ENCODE measurements at regions of chr16 and their contacts with region 1.

Region 1: GRCh38 chr16:11586856-11587642 is at the start of gene LITAF:
- DNase-seq: no peak
- H3K4me3 ChIP-seq: peak within 1 kb of the TSS; percentile 92 to 93
- H3K27ac ChIP-seq: peak within 1 kb of the TSS; percentile 99
- H3K4me1 ChIP-seq: peaks cover 36% of the 10 kb centered on the region
- H3K27me3 ChIP-seq: no peaks in the 10 kb centered on the region
- CTCF ChIP-seq: no peak
- POLR2A ChIP-seq: peak in 1 of 2 donors; percentile 91
- total RNA-seq, gene LITAF: 111 TPM

Region 2: DNA sequence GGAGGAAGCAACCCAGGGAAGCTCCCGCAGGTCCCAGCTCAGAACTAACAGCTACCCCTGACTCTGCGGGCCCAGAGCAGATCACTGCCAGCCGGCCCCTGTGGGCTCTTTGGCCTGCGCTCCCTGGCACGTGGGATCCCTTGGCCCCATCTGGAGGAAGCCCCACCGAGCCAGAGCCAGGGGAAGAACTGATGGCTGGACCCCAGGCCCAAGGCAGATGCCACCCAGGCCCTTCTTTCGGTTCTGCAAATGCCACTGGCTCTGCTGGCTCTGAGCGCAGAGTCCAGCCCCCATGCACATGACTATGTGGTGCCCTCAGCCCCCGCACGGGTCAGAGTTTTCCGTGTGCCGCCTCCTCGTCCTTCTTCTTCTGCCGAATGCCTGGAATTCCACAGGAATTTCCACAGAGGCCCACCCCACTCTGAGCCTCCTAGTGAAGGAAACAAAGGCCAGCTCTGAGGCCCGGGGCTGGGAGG is 45.5 kb after region 1 on chr16:
- intact Hi-C with region 1: loop called (anchors 5 kb)
- DNase-seq: no peak
- H3K4me3 ChIP-seq: peak overlapping the region in 1 of 2 donors; percentile 3
- H3K27ac ChIP-seq: peak overlapping the region; percentile 93
- H3K4me1 ChIP-seq: peaks cover 37% of the 10 kb centered on the region
- H3K27me3 ChIP-seq: no peaks in the 10 kb centered on the region
- CTCF ChIP-seq: no peak
- POLR2A ChIP-seq: no peak

Region 3: DNA sequence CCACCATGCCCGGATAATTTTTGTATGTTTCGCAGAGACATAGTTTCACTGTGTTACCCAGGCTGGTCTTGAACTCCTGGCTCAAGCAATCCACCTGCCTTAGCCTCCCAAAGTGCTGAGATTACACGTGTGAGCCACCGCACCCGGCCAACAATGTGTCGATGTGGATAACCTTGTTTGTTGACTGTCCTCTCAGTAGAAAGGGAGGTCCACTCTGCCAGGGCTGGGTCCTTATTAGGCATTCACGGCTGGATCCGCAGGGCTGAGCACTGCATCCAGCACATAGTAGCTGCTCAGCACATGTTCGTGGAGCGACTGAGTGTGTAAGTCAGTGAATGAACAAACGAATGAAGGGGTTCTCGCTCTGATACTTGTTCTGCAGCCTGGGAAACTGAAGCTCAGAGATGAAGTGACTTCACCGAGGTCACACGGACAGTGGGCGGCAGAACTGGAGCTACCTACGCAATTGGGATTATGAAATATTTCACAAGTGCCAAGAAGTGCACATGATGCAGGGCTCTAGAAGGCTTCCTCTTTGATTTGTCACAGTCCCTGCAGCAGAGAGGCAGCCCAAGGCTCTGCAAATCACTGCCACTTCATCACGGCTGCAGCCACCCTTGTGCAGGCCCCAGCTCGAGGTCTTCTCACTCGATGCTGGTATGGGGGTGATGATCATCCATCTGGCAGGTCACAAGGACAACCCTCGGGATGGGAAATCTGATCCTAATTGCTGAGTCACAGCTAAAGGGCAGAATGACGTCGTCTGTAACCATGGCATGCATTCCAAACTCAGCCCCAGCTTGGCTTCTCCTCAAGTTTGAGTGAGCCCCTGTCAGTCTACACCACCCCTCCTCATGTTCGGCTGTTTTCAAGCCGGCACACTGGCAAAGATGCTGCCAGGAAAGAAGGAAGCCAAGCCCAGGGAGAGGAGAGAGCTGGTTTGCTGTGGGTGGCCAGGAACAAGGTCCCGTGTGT is 53.2 kb after region 1 on chr16:
- intact Hi-C with region 1: loop called (anchors 5 kb)
- DNase-seq: peak in 1 of 2 donors; percentile 99
- H3K4me3 ChIP-seq: peak overlapping the region in 1 of 2 donors; percentile 22
- H3K27ac ChIP-seq: peak overlapping the region; percentile 98
- H3K4me1 ChIP-seq: peaks cover 21% of the 10 kb centered on the region
- H3K27me3 ChIP-seq: no peaks in the 10 kb centered on the region
- CTCF ChIP-seq: no peak
- POLR2A ChIP-seq: peak in 1 of 2 donors; percentile 71

Region 4: DNA sequence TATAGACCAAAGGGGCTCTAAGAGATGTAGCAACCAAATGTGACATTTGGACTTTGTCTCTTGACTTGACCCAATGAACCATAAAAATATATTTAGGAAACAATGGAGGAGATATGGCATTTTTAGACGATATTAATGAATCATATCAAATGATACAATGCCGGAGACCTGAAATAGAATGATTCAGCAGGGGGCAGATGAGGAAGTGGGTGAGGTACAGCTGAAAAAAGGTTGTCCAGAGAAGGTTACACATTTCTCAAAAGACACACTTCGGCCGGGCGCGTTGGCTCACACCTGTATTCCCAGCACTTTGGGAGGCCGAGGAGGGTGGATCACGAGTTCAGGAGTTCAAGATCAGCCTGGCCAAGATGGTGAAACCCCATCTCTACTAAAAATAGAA is 64.7 kb after region 1 on chr16:
- intact Hi-C with region 1: no loop called
- DNase-seq: no peak
- H3K4me3 ChIP-seq: no peak overlapping the region
- H3K27ac ChIP-seq: no peak overlapping the region
- H3K4me1 ChIP-seq: no peaks in the 10 kb centered on the region
- H3K27me3 ChIP-seq: no peaks in the 10 kb centered on the region
- CTCF ChIP-seq: no peak
- POLR2A ChIP-seq: no peak

Region 5: DNA sequence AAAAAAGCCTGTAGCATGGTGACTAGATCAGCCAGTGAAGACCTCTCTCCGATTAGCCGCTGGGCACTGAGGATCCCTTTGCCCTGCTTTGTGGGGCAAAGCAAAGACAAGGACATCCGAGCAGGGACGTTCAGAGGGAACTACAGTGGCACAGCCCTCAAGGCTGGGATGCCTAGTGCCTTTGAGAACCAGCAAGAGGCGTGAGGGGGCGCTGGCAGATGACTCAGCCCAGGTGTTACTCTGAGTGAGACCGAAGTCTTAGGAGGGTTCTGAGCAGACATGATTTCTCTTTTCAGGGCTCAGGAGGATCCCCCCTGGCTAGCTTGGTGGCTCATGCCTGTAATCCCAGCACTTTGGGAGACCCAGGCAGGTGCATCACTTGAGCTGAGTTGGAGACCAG is 1038.0 kb after region 1 on chr16:
- intact Hi-C with region 1: no loop called
- DNase-seq: peak in 1 of 2 donors; percentile 58
- H3K4me3 ChIP-seq: no peak overlapping the region
- H3K27ac ChIP-seq: no peak overlapping the region
- H3K4me1 ChIP-seq: no peaks in the 10 kb centered on the region
- H3K27me3 ChIP-seq: no peaks in the 10 kb centered on the region
- CTCF ChIP-seq: no peak
- POLR2A ChIP-seq: no peak